ENCODE measurements at regions of chr7 and their contacts with region 1.

Region 1: DNA sequence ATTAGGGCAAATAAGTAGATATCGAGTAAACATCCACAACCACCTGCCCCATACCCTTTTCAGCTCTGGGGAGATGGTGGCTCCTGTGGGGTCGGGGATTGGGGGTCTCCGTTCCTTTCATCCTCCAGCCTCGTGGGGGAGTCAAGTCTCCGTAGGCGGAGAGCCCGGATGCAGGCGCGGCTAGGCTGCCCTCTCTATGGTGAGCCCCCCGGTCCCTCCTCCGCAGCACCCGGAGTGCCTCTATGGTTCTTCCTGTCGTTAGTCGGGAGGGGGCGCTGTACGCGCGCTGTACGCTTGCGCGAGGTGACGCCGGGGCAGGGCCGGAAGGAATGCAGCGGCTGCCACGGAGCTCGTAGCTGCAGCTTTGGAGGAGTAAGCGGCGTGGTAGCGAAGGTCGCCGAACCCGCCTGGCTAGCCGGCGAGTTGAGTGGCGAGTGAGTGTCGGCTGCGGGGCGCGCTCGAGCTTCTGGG is 14.8 kb upstream of the MMD2 start:
- DNase-seq: peak; percentile 92
- ATAC-seq: peak; percentile 96
- H3K4me3 ChIP-seq: peak overlapping the region; percentile 72 to 84
- H3K27ac ChIP-seq: peak overlapping the region; percentile 94
- H3K4me1 ChIP-seq: peaks cover 0 to 5% of the 10 kb centered on the region in 2 experiments; a peak in 1 of 4 replicates
- H3K27me3 ChIP-seq: no peaks in the 10 kb centered on the region
- CTCF ChIP-seq: peak; percentile 83 to 93 (median 89); a peak in 5 of 6 replicates
- POLR2A ChIP-seq: peak; percentile 46
- RAD21 ChIP-seq: peak; percentile 77

Region 2: DNA sequence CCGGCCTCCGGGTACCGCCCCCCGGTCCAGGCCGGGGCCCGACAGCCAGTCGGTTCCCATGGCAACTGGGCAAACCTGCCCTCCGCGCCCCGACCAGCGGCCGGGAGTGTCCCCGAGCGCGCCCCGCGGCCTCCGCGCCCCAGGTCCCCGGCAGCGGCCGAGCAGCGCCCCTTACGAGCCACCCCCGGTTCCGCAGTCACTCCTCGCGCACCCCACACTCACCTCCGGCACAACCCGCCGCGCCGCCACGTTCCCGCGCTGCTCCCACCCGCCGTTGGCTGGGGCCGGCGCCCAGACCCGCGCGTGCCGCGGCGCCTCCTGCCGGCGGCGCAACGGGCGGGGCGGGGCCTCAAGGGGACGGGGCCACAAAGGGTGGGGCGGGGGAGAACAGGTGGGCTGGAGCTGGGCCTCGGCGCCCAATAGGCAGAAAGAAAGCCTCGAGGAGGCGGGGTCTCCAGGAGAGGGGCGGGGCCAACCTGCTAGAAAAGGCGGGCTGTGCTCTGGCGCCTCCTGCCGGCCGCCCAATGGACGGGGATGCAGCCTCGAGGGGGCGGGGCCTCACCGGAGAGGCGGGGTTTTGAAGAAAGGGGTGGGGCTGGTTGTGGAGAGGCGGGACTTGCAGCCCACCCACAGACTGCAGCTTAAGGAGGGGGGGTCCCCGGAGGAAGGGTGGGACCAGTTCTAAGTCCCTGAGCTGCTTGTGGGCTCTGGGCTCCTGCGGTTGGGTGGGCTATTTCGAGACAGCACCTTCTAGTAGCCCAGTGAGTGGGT is 90.2 kb before region 1 on chr7 and contains the start of gene RADIL:
- CTCF ChIA-PET with region 1: interaction called, 14 read pairs
- POLR2A ChIA-PET with region 1: no interaction called
- RAD21 ChIA-PET with region 1: no interaction called
- intact Hi-C with region 1: no loop called
- DNase-seq: peak; percentile 87
- ATAC-seq: peak; percentile 97
- H3K4me3 ChIP-seq: peak within 1 kb of the TSS; percentile 45 to 71
- H3K27ac ChIP-seq: peak within 1 kb of the TSS; percentile 63; the same call in 1 of the 2 replicates
- H3K4me1 ChIP-seq: peaks cover 0 to 8% of the 10 kb centered on the region in 2 experiments; a peak in 2 of 4 replicates
- H3K27me3 ChIP-seq: no peaks in the 10 kb centered on the region
- CTCF ChIP-seq: peak; percentile 80 to 93 (median 86)
- POLR2A ChIP-seq: no peak
- RAD21 ChIP-seq: peak; percentile 66
- total RNA-seq, gene RADIL: 5.3 TPM

Region 3: DNA sequence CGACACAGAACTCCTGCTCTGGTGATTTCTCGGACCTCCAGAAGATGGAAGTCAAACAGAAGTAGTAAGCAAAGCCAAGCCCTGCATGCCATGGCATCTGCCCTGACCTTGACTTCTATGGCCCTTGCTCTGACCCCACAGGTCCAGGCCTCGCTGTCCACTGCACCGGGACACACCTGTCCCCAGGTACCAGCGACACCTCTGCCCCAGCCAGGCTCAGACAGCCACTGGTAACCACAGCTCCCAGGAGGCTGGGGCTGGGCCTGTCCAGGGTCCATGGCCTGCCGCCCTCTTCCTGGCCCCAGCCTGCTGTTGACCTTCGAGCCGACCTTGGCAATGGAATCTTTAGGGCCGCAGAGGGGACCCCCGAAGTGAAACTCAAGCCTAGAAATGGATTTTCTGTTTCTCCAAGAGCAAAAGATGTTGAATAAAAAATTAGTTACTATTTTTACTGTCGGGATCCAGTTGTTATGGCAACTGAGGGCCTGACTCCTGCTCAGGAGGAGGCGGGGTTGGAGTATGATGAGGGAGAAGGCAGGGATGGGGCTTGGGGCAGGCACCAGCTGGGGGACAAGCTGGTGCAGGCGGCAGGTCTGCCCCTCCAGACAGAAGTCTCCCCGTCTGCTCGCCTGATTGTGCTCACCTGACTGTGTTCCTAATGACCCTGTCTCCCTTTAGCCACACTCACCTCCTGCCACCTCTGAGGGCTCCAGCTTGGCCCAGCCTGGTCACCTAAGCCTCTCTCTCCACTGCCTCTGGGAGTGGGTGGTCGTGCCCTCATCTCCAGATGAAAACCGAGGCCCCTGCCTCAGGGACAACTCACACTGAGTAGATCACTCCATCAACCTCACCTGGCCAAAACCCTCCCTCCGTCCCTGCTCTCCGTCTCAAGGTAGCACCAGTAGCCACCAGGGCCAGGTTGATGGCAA is 10.6 kb before region 1 on chr7:
- CTCF ChIA-PET with region 1: interaction called, 10 read pairs
- POLR2A ChIA-PET with region 1: no interaction called
- RAD21 ChIA-PET with region 1: no interaction called
- intact Hi-C with region 1: no loop called
- DNase-seq: no peak
- ATAC-seq: no peak
- H3K4me3 ChIP-seq: no peak overlapping the region
- H3K27ac ChIP-seq: no peak overlapping the region
- H3K4me1 ChIP-seq: no peaks in the 10 kb centered on the region
- H3K27me3 ChIP-seq: no peaks in the 10 kb centered on the region
- CTCF ChIP-seq: no peak
- POLR2A ChIP-seq: no peak
- RAD21 ChIP-seq: no peak

Region 4: DNA sequence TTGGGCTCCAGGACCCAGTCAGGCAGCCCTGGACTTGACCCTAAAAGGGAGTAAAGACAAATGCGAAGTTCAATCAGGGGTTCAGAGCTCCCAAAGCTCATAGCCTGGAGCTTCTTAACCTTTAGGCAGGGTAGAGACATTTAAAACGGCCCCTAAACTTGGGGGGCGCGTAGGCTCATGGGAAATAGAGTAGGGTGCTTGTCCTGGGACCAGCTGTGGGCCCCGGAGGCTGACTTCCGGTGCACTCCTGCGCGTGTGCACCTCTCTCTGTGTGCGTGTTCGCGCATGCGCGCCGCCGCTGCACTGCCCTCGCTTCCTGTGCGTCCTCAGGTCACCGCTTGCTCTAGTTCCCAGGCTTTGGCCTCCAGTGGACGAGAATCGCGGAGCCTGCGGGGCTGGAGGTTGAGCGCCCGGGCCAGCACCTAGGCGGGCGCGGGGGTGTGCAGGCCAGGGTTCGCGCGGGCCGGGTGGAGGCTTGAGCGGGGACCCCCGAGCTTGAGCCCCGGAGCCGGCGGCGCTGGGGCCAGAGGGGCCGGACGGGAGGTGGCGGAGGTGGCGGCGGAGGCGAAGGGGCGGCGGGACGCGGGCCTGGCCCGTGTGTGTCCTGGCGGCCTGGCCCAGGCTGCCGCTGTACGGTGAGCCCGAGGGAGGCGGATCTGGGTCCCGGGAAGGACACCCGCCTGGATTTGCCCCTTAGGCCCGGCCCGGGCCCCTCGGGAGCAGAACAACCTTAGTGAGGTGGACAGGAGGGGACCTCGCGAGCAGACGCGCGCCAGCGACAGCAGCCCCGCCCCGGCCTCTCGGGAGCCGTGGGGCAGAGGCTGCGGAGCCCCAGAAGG is 72.0 kb after region 1 on chr7 and contains the start of gene RBAK:
- CTCF ChIA-PET with region 1: interaction called, 4 read pairs
- POLR2A ChIA-PET with region 1: no interaction called
- RAD21 ChIA-PET with region 1: no interaction called
- intact Hi-C with region 1: loop called (anchors 5 kb)
- DNase-seq: peak; percentile 92
- ATAC-seq: peak; percentile 99
- H3K4me3 ChIP-seq: peak within 1 kb of the TSS; percentile 77 to 84
- H3K27ac ChIP-seq: peak within 1 kb of the TSS; percentile 91
- H3K4me1 ChIP-seq: peaks cover 3 to 7% of the 10 kb centered on the region in 2 experiments; a peak in 2 of 4 replicates
- H3K27me3 ChIP-seq: no peaks in the 10 kb centered on the region
- CTCF ChIP-seq: no peak
- POLR2A ChIP-seq: peak; percentile 87
- RAD21 ChIP-seq: no peak
- total RNA-seq, gene RBAK: 16.2 TPM

Region 5: GRCh38 chr7:5088906-5089305 is 115.1 kb after region 1 on chr7:
- CTCF ChIA-PET with region 1: interaction called, 15 read pairs
- POLR2A ChIA-PET with region 1: no interaction called
- RAD21 ChIA-PET with region 1: interaction called in 1 of 2 experiments, 4 read pairs
- intact Hi-C with region 1: loop called (anchors 2 kb)
- DNase-seq: no peak
- ATAC-seq: peak; percentile 10
- H3K4me3 ChIP-seq: peak overlapping the region in 1 of 2 experiments; percentile 14; a peak in 1 of 4 replicates
- H3K27ac ChIP-seq: peak overlapping the region; percentile 42
- H3K4me1 ChIP-seq: peaks cover 4 to 13% of the 10 kb centered on the region in 2 experiments
- H3K27me3 ChIP-seq: no peaks in the 10 kb centered on the region
- CTCF ChIP-seq: no peak
- POLR2A ChIP-seq: no peak
- RAD21 ChIP-seq: no peak

Measured in HCT116 (cell line).